GM12878 (cell line): ENCODE measurements at regions of chr1 and their contacts with region 1.

Region 1: DNA sequence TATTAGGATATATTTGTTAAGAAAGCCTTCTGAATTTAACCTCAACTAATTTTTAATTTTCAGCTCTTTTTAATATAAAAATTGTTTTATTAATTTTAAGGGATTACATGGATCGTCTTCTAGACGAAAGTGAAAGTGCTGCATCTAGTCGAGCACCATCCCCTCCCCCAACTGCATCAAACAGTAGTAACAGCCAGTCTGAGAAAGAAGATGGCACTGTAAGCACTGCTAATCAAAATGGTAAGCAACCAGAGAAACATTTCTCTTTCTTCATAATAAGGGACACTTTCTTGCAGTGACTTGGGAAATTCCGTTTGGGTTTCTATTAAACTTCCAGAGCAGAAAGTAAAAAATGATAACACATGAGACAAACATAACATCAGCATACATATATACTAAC is 56.9 kb downstream of the MIER1 start:
- DNase-seq: no peak
- ATAC-seq: peak; percentile 60
- H3K4me3 ChIP-seq: no peak overlapping the region
- H3K27ac ChIP-seq: no peak overlapping the region; the same call in 1 of the 2 replicates
- H3K4me1 ChIP-seq: peaks cover 17% of the 10 kb centered on the region
- H3K27me3 ChIP-seq: no peaks in the 10 kb centered on the region
- CTCF ChIP-seq: no peak; a peak in 1 of 6 replicates
- EP300 ChIP-seq: no peak
- POLR2A ChIP-seq: no peak
- RAD21 ChIP-seq: no peak

Region 2: GRCh38 chr1:66764994-66765578 is 216.6 kb before region 1 on chr1:
- CTCF ChIA-PET with region 1: interaction called, 4 read pairs
- POLR2A ChIA-PET with region 1: no interaction called
- RAD21 ChIA-PET with region 1: interaction called, 3 read pairs
- SMC1A ChIA-PET with region 1: interaction called, 4 read pairs
- in situ Hi-C with region 1: no loop called
- intact Hi-C with region 1: loop called (anchors 5 kb)
- DNase-seq: no peak
- ATAC-seq: peak; percentile 80
- H3K4me3 ChIP-seq: no peak overlapping the region
- H3K27ac ChIP-seq: no peak overlapping the region
- H3K4me1 ChIP-seq: no peaks in the 10 kb centered on the region
- H3K27me3 ChIP-seq: no peaks in the 10 kb centered on the region
- CTCF ChIP-seq: peak; percentile 50 to 75 (median 69)
- EP300 ChIP-seq: no peak
- POLR2A ChIP-seq: no peak
- RAD21 ChIP-seq: peak; percentile 85

Region 3: DNA sequence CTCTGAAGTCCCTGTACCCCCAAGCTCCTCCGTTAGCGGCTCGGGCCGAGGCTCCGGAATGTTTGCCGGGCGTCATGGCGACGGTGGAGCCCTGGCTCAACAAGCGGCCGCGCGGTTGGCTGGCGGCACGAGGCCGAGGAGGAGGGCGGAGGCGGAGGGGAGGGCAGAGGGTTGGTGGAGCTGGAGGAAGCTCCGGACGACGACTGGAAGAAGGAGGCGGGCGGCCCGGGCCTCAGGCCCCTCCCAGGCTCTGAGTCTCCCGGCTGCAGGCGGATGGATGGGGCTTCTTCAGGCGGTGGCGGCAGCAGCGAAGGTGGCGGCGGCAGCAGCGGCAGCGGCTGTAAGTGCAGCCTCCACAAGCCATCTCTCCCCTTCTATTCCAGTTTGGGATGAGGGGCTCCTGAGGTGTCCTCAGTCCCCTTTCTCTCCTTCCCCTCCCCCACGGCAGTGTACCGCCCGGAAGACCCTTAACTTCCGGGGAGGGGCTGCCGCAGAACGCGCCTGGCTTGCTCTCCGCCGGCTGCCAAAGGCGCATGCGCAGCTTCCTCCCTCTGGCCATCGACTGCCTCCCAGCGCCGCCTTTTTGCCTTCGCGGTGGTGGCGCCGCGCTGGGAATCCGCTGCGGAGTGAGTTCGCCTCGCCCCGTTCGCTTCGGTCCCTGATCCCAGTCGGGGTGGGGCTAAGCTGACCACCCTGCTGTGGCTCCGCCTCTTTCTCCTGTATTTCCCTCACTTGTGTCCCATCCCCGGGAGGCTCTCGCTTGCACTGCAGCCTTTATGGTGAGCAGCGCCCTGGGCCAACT is 56.7 kb before region 1 on chr1 and contains the starts of genes DNAI4 and MIER1:
- CTCF ChIA-PET with region 1: interaction called, 3 read pairs
- POLR2A ChIA-PET with region 1: interaction called, 10 read pairs
- RAD21 ChIA-PET with region 1: interaction called, 12 read pairs
- SMC1A ChIA-PET with region 1: interaction called, 3 read pairs
- in situ Hi-C with region 1: no loop called
- intact Hi-C with region 1: loop called (anchors 2 kb)
- DNase-seq: peak; percentile 87
- ATAC-seq: peak; percentile 96
- H3K4me3 ChIP-seq: peak within 1 kb of the TSS; percentile 79
- H3K27ac ChIP-seq: peak within 1 kb of the TSS; percentile 83
- H3K4me1 ChIP-seq: peaks cover 10% of the 10 kb centered on the region; the same call in 1 of the 2 replicates
- H3K27me3 ChIP-seq: no peaks in the 10 kb centered on the region
- CTCF ChIP-seq: peak; percentile 14 to 30 (median 21); a peak in 3 of 6 replicates
- EP300 ChIP-seq: no peak
- POLR2A ChIP-seq: peak; percentile 85
- RAD21 ChIP-seq: no peak
- polyA plus RNA-seq, gene DNAI4: 0.15 to 0.21 TPM
- polyA plus RNA-seq, gene MIER1: 16.1 to 24.6 TPM

Region 4: DNA sequence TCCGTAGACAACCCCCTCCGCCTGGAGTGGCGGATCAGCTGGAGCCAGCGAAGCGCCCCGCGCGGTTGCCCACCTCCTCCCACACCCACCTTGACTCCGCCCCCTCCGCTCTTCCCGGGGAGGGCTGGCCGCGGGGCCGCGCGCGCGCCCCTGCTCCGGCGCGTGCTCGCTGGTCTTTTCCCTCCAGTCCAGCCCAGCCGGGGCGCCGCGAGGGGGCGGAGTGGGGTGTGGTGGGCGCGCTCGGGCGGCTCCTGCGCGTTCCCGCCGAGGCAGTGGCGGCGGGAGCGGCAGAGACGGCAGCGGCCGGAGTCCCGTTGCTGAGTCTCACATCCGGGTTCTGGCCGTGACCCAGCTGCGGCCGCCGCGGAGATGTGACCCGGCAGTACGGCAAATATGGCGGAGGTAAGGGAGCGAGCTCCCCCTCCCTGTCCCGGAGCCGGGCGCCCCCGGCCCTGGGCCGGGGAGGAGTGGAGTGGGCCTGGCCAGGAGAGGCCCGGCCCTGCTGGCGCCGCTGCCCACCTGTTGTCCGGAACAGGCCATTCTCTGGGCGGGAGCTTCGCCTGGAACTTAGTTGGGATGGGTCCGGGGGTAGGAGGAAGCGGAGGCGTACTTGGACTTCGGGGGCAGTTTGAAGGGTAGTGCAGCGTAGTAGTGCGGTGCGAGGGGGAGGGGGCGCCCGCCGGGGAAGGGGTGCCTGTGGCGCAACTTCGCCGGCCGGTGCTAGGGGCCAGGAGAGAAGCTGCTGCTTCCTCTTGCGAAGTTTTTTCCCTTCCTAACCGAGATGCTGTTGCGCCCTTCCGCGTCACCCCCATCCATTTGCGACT is 51.5 kb before region 1 on chr1:
- CTCF ChIA-PET with region 1: interaction called, 3 read pairs
- POLR2A ChIA-PET with region 1: interaction called, 10 read pairs
- RAD21 ChIA-PET with region 1: interaction called, 12 read pairs
- SMC1A ChIA-PET with region 1: interaction called, 3 read pairs
- in situ Hi-C with region 1: no loop called
- intact Hi-C with region 1: loop called (anchors 2 kb)
- DNase-seq: peak; percentile 61
- ATAC-seq: peak; percentile 76
- H3K4me3 ChIP-seq: peak overlapping the region; percentile 92
- H3K27ac ChIP-seq: peak overlapping the region; percentile 94
- H3K4me1 ChIP-seq: peaks cover 4% of the 10 kb centered on the region; the same call in 1 of the 2 replicates
- H3K27me3 ChIP-seq: no peaks in the 10 kb centered on the region
- CTCF ChIP-seq: peak; percentile 12 to 31 (median 18); a peak in 3 of 6 replicates
- EP300 ChIP-seq: no peak
- POLR2A ChIP-seq: peak; percentile 92
- RAD21 ChIP-seq: no peak

Region 5: DNA sequence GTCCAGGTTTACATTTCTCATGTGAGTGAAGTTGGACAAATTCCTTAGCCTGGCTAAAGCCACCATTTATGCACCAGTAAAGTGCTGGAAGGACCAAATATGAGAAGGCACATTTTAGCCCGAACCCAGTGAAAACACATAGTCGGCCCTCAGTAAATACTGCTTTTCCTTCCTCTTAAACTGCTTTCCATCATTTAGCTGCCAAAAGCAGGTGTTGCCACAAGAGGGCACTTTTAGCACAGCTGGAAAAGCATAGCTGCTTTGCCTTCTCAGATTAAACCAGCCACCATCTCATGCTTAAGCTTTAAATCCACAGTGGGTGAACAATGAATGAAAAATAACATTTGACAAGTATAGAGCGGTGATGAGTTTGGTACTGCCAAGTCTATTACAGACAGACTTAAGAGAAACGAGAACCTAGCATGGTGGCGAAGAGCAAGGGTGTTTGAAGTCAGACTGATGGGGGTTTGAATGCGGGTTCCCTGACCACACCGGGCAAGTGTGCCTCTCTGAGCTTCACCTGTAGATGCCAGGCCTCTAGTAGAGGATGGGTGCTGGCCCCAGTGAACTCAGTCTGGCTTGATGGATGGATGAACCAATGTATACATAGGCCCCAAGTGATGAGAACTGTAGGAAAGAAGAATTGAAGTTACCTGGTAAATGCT is 14.5 kb after region 1 on chr1:
- CTCF ChIA-PET with region 1: interaction called, 15 read pairs
- POLR2A ChIA-PET with region 1: interaction called, 3 read pairs
- RAD21 ChIA-PET with region 1: interaction called, 7 read pairs
- SMC1A ChIA-PET with region 1: interaction called, 19 read pairs
- in situ Hi-C with region 1: no loop called
- intact Hi-C with region 1: no loop called
- DNase-seq: peak; percentile 59
- ATAC-seq: peak; percentile 89
- H3K4me3 ChIP-seq: no peak overlapping the region
- H3K27ac ChIP-seq: no peak overlapping the region
- H3K4me1 ChIP-seq: no peaks in the 10 kb centered on the region
- H3K27me3 ChIP-seq: no peaks in the 10 kb centered on the region
- CTCF ChIP-seq: peak; percentile 76 to 85 (median 81)
- EP300 ChIP-seq: no peak
- POLR2A ChIP-seq: no peak
- RAD21 ChIP-seq: peak; percentile 94

Region 6: GRCh38 chr1:67059346-67059745 is 77.7 kb after region 1 on chr1:
- CTCF ChIA-PET with region 1: no interaction called
- POLR2A ChIA-PET with region 1: no interaction called
- RAD21 ChIA-PET with region 1: no interaction called
- SMC1A ChIA-PET with region 1: no interaction called
- in situ Hi-C with region 1: no loop called
- intact Hi-C with region 1: no loop called
- DNase-seq: no peak
- ATAC-seq: no peak
- H3K4me3 ChIP-seq: no peak overlapping the region
- H3K27ac ChIP-seq: no peak overlapping the region
- H3K4me1 ChIP-seq: no peaks in the 10 kb centered on the region
- H3K27me3 ChIP-seq: no peaks in the 10 kb centered on the region; a peak in 1 of 4 replicates
- CTCF ChIP-seq: no peak
- EP300 ChIP-seq: no peak
- POLR2A ChIP-seq: no peak
- RAD21 ChIP-seq: no peak

Region 7: DNA sequence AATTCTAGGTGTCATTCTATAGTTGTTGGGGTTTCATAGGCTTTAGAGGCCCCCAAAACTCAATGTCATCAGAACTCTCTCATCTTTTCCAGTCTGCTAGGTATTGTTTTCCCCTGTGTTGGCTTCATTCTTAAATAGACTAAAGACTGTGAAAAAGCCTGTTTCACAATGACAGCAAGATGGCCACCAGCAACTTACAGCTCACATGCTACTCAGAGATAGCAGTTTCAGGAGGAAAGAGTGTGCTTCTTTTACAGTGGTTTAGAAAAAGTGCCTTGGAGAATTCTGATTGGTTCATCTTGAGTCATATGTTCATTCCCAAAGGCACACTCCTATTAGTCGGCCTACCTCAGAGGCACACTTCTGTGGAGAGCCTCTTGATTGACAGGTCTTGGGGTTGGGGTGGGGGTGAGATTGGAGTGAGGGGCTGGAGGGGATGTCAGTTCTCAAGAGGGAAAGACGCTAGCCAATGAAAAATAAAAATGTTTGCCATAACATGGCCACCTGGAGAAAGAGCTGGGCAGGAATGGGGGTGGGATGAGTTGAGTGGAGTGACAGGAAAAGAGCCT is 193.1 kb after region 1 on chr1:
- CTCF ChIA-PET with region 1: no interaction called
- POLR2A ChIA-PET with region 1: no interaction called
- RAD21 ChIA-PET with region 1: no interaction called
- SMC1A ChIA-PET with region 1: no interaction called
- in situ Hi-C with region 1: no loop called
- intact Hi-C with region 1: no loop called
- DNase-seq: no peak
- ATAC-seq: peak; percentile 72
- H3K4me3 ChIP-seq: no peak overlapping the region
- H3K27ac ChIP-seq: no peak overlapping the region
- H3K4me1 ChIP-seq: peaks cover 16% of the 10 kb centered on the region
- H3K27me3 ChIP-seq: no peaks in the 10 kb centered on the region
- CTCF ChIP-seq: no peak
- EP300 ChIP-seq: peak in 1 of 2 experiments; percentile 9; a peak in 1 of 4 replicates
- POLR2A ChIP-seq: no peak
- RAD21 ChIP-seq: no peak

Region 8: GRCh38 chr1:67339623-67340343 is 358.1 kb after region 1 on chr1:
- CTCF ChIA-PET with region 1: no interaction called
- POLR2A ChIA-PET with region 1: no interaction called
- RAD21 ChIA-PET with region 1: no interaction called
- SMC1A ChIA-PET with region 1: no interaction called
- in situ Hi-C with region 1: no loop called
- intact Hi-C with region 1: loop called (anchors 10 kb)
- DNase-seq: peak; percentile 84
- ATAC-seq: peak; percentile 35
- H3K4me3 ChIP-seq: peak overlapping the region; percentile 20; the same call in 1 of the 2 replicates
- H3K27ac ChIP-seq: peak overlapping the region; percentile 87
- H3K4me1 ChIP-seq: peaks cover 71% of the 10 kb centered on the region
- H3K27me3 ChIP-seq: no peaks in the 10 kb centered on the region
- CTCF ChIP-seq: no peak
- EP300 ChIP-seq: no peak
- POLR2A ChIP-seq: no peak
- RAD21 ChIP-seq: no peak

Region 9: GRCh38 chr1:67430352-67431155 is 448.9 kb after region 1 on chr1 and contains the start of gene SERBP1:
- CTCF ChIA-PET with region 1: no interaction called
- POLR2A ChIA-PET with region 1: no interaction called
- RAD21 ChIA-PET with region 1: no interaction called
- SMC1A ChIA-PET with region 1: interaction called, 3 read pairs
- in situ Hi-C with region 1: loop called (anchors 10 kb)
- intact Hi-C with region 1: loop called (anchors 10 kb)
- DNase-seq: peak; percentile 98
- ATAC-seq: peak; percentile 86
- H3K4me3 ChIP-seq: peak within 1 kb of the TSS; percentile 91
- H3K27ac ChIP-seq: peak within 1 kb of the TSS; percentile 96
- H3K4me1 ChIP-seq: peaks cover 15% of the 10 kb centered on the region
- H3K27me3 ChIP-seq: no peaks in the 10 kb centered on the region
- CTCF ChIP-seq: no peak
- EP300 ChIP-seq: peak in 1 of 2 experiments; percentile 50; a peak in 2 of 4 replicates
- POLR2A ChIP-seq: peak; percentile 59
- RAD21 ChIP-seq: no peak
- polyA plus RNA-seq, gene SERBP1: 76.7 to 111 TPM